ENCODE measurements at regions of chrX and their contacts with region 1.

Region 1: DNA sequence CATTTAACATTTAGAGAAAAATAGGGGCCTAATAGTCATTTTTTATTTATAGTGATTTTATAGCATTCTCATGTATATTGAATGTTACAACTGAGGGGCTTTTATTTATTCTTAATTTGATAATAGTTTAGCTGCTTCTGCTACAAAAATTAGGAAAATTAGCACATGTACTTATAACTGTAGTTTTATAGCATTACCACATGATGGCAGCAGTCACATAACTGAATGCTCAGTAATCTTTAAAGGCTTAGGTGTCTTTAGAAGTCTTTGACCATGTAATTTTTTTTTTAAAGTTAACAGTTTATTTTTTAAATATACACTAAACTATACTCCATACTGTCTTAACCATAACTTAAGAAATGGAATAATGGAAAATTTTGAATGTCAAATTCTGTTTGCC is 136.6 kb downstream of the STAG2 start:
- DNase-seq: no peak

Region 2: DNA sequence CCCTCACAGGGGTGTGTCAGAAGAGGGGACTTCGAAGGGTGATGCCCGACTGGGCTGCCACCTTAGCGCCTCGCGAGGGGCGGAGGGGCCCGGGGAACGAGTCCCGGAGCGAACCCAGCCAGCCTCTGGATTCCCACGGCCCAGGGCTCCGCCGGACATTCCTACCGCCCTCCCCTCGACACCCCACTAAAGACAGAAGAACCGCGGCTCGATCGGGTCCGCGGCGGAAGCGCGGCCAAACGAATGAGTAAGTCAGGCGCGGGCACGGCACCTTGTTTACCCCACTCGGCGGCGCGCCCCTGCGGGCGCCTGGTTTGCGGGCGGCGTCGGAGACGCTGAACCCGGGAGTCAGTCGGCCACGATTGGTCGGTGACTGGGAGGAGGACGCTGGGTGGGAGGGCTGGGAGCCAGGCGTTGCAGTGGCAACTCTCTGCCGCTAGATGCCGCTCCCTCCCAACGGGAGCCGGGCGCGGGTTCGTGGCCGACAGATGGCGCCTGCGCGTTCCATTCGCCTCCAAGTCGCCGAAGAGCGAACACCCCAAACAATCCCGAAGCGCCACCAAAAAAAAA is 138.0 kb before region 1 on chrX:
- intact Hi-C with region 1: no loop called
- DNase-seq: peak; percentile 97

Region 3: GRCh38 chrX:125605145-125605544 is 1507.1 kb after region 1 on chrX:
- intact Hi-C with region 1: loop called in 1 of 2 experiments (anchors 10 kb)
- DNase-seq: no peak

Measured in posterior vena cava (tissue), 2 donors.